KBM-7 (cell line): ENCODE measurements at regions of chr10 and their contacts with region 1.

Region 1: GRCh38 chr10:32795598-32796183 is 162.3 kb downstream of the ITGB1 start:
- DNase-seq: peak; percentile 54

Region 2: GRCh38 chr10:33008499-33009243 is 213.0 kb after region 1 on chr10:
- in situ Hi-C with region 1: loop called (anchors 10 kb)
- DNase-seq: peak; percentile 82

Region 3: DNA sequence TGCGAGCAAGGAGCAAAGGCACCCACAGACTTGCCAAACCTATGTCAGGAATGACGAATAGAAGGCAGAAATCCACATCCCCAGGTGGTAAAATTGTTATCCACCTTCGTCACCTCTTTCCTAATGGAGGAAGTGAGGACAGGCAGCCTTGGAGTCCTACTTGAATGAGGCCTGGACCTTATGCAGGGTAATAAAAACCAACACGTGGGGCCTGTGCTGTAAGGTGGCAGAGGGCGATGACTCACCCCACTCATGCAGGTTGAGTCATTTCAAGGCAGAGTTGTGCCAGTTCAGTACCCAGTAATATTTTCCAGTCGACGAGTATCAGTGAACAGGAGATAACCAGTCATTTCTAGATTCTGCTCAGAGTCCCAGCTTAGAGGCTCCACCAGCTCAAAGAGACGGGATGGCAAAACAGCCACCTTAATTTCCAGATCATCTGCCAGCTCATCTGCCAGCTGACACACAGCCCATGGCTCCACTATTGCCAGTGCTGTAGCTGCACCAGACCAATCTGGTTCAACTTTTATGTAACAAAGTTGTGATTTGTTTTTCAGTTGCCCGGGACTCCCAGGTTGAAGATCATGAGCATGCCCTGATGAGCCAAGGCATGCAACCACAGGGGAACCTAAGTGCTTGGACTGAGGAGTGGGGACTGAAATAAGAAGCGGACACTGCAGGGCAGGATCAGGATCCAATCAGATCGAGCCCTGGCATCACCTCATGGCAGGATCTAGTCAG is 338.5 kb after region 1 on chr10:
- in situ Hi-C with region 1: loop called (anchors 25 kb)
- DNase-seq: no peak